ENCODE measurements at regions of chr14 and their contacts with region 1.

Region 1: DNA sequence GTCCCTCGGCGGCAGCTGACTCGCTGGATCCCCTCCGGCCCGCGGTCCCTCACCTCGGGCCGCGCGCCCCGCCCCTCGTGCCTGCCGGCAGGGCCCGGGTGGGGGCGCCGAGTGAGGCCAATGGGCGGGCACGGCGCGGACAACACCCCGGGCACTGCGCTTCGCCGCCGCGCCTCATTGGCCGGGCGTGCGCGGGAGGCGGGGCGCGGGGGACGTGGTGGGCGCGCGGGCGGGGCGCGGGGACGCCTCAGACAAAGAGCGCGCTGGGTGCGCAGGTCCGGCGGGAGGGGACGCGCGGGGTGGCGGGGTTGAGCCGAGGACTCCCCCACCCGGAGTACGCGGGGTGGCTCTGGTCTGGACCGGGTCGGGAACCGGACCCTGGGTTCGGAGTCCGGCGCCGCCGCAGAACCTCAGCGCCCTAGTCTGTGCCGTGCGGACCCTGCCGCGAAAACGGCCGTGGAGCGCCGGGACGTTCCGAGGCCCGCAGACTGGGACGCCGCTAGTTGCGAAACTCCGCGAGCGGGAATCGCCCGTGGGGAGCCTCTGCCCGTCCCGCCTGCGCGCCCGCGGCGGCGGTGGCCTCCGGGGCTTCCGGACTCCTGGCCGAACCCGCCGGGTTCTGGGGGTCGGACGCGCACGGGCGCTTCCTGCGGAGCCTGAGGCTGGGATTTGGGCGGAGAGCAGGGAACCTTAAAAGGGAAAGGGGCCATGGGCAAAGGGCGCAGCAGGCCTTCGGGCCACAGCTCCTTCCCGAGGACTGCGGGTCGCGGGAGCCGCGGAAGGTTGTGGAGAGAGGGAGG is at the start of gene SLC25A29:
- DNase-seq: peak; percentile 79
- H3K4me3 Mint-ChIP-seq: peak within 1 kb of the TSS; percentile 70
- H3K27ac Mint-ChIP-seq: no peak within 1 kb of the TSS
- H3K4me1 Mint-ChIP-seq: peaks cover 10% of the 10 kb centered on the region
- H3K27me3 Mint-ChIP-seq: peaks cover 6% of the 10 kb centered on the region
- total RNA-seq, gene SLC25A29: 14.9 to 15.7 TPM

Region 2: GRCh38 chr14:100383727-100384158 is 77.1 kb after region 1 on chr14:
- CTCF ChIA-PET with region 1: interaction called, 13 read pairs
- POLR2A ChIA-PET with region 1: no interaction called
- intact Hi-C with region 1: no loop called
- DNase-seq: peak; percentile 73
- H3K4me3 Mint-ChIP-seq: no peak overlapping the region
- H3K27ac Mint-ChIP-seq: no peak overlapping the region
- H3K4me1 Mint-ChIP-seq: peaks cover 8% of the 10 kb centered on the region
- H3K27me3 Mint-ChIP-seq: no peaks in the 10 kb centered on the region

Region 3: GRCh38 chr14:100747021-100747586 is 440.5 kb after region 1 on chr14:
- CTCF ChIA-PET with region 1: no interaction called
- POLR2A ChIA-PET with region 1: no interaction called
- intact Hi-C with region 1: no loop called
- DNase-seq: peak; percentile 20
- H3K4me3 Mint-ChIP-seq: no peak overlapping the region
- H3K27ac Mint-ChIP-seq: no peak overlapping the region
- H3K4me1 Mint-ChIP-seq: no peaks in the 10 kb centered on the region
- H3K27me3 Mint-ChIP-seq: peaks cover 4% of the 10 kb centered on the region

Measured in activated CD4-positive, alpha-beta memory T cell treated with anti-CD3 and anti-CD28 coated beads for 36 hours (primary cell).